BJ (cell line): ENCODE measurements at regions of chr7 and their contacts with region 1.

Region 1: DNA sequence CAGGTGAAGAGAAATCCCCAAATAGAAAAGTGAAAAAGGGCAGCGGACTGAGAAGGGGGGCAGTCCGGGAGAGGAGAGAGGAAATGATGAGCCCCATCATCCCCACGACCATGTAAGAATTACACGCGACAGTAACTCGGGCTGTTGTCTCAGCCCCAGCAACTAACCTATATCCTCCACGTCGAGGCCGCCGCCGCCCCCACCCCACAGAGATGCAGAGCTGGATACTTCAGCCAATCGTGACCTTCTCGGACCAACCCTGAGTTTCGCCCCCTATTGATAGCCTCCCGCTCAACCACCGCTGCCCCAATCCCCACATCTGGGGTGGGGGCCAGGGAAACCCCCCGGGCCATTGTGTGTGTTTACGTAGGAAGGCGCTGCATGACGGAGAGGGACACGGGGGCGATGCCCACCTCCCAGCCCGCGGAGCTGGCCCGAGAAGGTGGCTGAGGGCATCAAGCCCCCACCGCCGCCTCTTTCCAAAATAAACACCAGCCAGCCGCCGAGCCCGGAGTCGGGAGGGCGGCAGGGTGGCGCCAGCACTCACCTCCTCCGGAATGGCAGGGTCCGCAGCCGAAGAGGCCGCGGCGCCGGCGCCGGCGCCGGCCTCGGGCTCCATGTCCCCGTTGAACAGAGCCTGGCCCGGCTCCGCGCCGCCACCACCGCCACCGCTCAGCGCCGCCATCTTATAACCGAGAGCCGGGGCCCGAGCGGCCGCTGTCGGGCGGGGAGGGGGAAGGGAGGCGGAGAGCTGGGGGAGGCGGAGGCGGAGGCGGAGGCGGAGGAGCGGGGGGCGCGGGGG is 509 bp downstream of the BRAF start:
- DNase-seq: no peak
- H3K4me3 ChIP-seq: peak overlapping the region; percentile 89
- H3K27me3 ChIP-seq: no peaks in the 10 kb centered on the region
- CTCF ChIP-seq: peak; percentile 69

Region 2: DNA sequence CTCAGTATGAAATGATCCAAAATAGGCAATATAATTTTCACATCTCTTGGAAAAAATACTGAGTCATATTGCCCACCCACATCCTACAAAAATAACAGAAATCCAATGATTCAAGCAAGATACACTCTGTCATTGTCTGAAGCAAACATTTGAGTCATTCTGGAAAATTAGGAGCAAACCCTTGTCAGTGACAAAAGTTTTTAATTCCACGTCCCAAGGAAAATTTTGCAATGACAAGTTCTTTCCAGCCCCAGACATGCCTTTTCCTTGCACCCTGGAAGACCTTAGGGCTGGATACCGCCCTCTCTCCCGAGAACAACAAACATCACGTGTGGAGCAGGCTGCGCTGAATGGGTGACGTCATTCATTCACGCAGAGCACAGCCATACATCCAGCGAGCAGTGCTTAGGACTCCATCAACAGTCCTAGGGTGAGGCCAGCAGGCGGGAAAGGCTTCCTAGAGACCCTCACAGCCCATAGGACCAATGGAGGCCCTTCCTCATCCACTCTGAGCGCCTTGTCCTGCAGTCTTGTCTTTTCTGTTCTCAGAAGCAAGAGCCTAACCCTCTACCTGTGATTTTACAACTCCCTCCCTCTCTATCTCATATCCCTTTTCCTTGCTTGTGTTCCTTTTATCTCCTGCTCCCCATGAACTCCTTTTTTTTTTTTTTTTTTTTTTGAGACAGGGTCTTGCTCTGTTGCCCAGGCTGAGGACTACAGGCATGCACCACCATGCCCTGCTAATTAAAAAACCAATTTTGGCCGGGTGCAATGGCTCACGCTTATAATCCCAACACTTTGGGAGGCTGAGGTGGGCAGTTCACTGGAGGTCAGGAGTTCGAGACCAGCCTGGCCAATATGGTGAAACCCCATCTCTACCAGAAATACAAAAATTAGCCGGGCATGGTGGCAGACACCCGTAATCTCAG is 723.9 kb before region 1 on chr7:
- CTCF ChIA-PET with region 1: no interaction called
- POLR2A ChIA-PET with region 1: no interaction called
- DNase-seq: no peak
- H3K4me3 ChIP-seq: no peak overlapping the region
- H3K27me3 ChIP-seq: peaks cover 2% of the 10 kb centered on the region
- CTCF ChIP-seq: no peak

Region 3: GRCh38 chr7:140726281-140726680 is 197.9 kb before region 1 on chr7:
- CTCF ChIA-PET with region 1: no interaction called
- POLR2A ChIA-PET with region 1: interaction called, 11 read pairs
- DNase-seq: no peak
- H3K4me3 ChIP-seq: no peak overlapping the region
- H3K27me3 ChIP-seq: no peaks in the 10 kb centered on the region
- CTCF ChIP-seq: peak; percentile 48

Region 4: DNA sequence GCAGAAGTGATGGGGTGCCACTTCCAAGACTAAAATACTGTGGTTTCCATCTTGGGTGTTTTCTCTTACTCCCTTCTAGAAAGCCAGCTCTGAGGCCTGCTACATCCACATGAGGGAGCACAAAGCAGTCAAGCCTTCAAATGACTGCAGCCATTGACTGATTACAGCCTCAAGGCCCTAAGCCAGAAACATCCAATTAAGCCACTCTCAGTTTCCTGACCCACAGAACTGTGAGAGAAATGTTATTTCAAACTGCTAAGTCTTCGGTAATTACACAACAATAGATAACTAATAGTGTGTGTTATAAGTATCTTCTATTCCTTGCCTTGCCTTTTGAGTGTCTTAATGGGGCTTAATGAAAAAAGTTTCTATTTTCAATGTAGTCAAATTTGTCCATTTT is 24.3 kb before region 1 on chr7:
- CTCF ChIA-PET with region 1: no interaction called
- POLR2A ChIA-PET with region 1: no interaction called
- DNase-seq: no peak
- H3K4me3 ChIP-seq: no peak overlapping the region
- H3K27me3 ChIP-seq: no peaks in the 10 kb centered on the region
- CTCF ChIP-seq: no peak

Region 5: GRCh38 chr7:141039376-141039775 is 115.2 kb after region 1 on chr7:
- CTCF ChIA-PET with region 1: no interaction called
- POLR2A ChIA-PET with region 1: no interaction called
- DNase-seq: no peak
- H3K4me3 ChIP-seq: no peak overlapping the region
- H3K27me3 ChIP-seq: no peaks in the 10 kb centered on the region
- CTCF ChIP-seq: no peak